Posterior cingulate gyrus (tissue), 11 donors: ENCODE measurements at regions of chr7 and their contacts with region 1.

Region 1: GRCh38 chr7:27662490-27663205 is at the start of gene HIBADH:
- DNase-seq: peak; percentile 94 to 100 (median 97)

Region 2: GRCh38 chr7:27364344-27365100 is 298.1 kb before region 1 on chr7:
- intact Hi-C with region 1: loop called (anchors 5 kb)
- DNase-seq: peak in 9 of 10 donors; percentile 39 to 95 (median 60)

Region 3: DNA sequence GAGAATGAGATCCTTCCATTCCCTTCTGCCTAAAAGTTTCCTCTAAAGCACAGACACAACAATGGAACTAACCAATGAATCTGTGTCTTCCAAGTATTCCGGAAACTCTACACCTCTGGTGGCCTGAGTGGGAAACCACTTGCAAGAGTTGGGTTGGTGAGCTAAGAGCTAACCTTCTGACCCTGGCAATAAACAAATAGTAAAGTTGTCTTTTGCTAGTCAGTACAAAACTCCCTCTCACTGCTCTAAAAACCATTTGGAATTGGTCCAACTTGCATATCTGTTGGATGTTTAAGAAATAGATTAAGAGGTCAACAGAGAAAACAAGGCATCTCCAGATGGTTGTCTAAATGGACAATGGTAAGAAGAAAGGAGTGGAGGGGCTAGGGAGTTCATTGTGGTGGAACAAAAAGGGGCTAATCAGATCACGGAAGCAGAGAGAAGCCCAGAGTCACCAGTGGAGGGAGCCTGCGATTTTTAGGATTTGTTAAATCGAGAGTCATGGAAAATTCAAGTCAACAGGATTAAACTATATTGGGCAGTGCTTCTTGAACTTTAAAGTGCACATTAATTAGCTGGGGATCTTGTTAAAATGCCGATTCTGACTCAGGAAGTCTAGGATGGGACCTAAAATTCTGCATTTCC is 227.8 kb before region 1 on chr7:
- intact Hi-C with region 1: no loop called
- DNase-seq: no peak

Region 4: DNA sequence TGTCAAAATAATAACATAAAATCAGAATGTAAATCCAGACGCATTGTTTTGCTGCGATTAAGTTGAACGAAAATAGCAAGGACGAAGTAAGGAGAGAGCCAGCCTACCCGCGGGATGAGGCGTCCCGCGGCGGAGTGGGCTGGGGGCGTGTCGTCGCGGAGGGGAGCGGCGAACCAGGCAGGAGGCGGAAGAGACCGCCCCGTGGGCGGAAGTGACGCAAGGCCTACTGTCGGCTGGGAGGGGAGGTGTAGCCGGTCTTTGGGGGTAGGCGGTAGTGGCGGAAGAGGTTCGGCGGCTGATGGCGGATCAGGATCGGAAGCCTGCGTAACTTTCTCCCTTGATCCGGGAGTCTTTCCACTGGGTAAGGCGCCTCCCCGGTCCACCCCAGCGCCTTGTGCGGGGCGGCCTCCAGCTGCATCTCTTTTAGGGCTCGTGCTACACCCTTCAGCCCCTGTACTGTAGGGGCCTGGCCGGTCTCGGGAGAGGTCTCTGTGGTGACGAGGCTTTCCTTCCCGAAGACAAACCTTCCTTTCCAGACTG is 77.3 kb after region 1 on chr7 and contains the start of gene TAX1BP1:
- intact Hi-C with region 1: loop called (anchors 5 kb)
- DNase-seq: peak; percentile 94 to 99 (median 96)

Region 5: DNA sequence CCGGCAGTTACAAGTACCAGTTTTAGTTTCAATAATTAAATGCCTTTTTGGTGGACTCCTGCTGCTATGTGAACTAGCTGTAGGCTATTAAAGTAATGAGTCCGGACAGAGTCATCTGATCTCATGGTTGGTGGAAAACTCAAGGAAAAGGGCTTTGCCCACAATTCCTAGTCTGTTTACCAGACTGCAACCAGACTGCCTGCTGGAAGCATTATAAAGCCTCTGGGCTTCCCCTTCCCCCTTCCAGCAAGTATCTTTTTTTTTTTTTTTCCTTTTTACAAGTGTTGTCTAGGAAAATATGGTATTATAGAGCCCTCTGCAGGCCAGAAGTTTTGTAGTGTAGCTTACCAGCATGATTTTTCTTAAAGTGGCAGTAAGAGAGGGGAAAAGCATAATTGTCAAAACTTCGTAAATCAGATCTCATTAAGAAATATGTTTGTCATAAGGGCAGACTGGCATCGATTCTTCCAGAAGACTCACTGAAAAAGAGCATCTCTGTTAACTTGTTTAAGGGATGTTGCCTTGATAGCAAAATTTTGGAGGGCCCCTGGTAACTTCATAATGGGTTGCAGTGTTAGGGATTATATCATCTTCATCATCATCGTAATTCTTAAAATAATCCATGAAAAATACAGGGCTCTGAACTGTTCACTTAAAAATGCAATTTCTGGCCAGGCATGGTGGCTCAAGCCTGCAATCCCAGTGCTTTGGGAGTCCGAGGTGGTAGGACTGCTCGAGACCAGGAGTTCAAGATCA is 258.6 kb after region 1 on chr7:
- intact Hi-C with region 1: loop called (anchors 10 kb)
- DNase-seq: no peak